Mucosa of descending colon (tissue), 3 donors: ENCODE measurements at regions of chr6 and their contacts with region 1.

Region 1: DNA sequence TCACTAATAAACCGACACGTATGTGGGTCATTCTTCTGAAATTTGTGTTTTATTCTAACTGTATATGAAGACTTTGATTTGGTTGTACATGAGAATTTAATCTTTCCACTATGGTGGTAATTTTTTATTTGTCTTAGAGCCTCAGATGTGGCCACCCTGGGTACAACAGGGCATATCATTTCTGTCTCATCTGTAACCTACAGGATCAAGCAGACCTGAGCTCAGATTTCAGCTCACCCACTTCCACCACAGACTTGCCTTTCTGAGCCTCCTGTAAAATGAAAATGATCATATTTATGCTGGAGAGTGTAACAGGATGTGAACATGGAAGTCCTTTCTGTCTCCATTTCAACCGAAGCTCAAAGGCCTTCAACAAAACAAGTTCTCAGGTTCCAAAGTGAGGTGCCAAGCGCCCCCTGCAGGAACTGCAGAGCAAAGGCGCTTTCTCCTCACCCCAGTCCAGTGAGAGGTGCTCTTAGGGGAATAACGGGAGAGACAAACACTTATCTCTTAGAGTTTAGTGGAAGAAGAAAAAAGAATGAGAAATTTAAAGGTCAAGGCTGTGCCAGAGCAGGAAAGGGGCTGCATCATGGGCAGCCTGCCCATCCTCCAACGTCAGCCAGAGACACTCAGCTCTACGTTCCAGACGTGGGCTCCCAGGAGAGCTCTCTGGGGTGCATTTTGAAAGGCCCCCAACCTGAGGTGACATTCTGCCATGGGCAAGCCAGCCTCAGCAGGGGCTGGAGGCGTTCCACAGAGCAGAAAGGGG is 23.0 kb upstream of the CD24 start:
- DNase-seq: peak in 2 of 3 donors; percentile 59 to 80
- ATAC-seq: peak; percentile 89
- H3K4me3 ChIP-seq: no peak overlapping the region
- H3K4me1 ChIP-seq: no peaks in the 10 kb centered on the region
- CTCF ChIP-seq: peak; percentile 77

Region 2: GRCh38 chr6:106439446-106439845 is 558.1 kb before region 1 on chr6:
- intact Hi-C with region 1: loop called in 1 of 2 experiments (anchors 10 kb)
- DNase-seq: no peak
- ATAC-seq: no peak
- H3K4me3 ChIP-seq: no peak overlapping the region
- H3K4me1 ChIP-seq: peaks cover 5% of the 10 kb centered on the region
- CTCF ChIP-seq: no peak

Region 3: GRCh38 chr6:106757267-106757666 is 240.3 kb before region 1 on chr6:
- intact Hi-C with region 1: no loop called
- DNase-seq: no peak
- ATAC-seq: no peak
- H3K4me3 ChIP-seq: no peak overlapping the region
- H3K4me1 ChIP-seq: no peaks in the 10 kb centered on the region
- CTCF ChIP-seq: no peak